ENCODE measurements at regions of chr6 and their contacts with region 1.

Region 1: DNA sequence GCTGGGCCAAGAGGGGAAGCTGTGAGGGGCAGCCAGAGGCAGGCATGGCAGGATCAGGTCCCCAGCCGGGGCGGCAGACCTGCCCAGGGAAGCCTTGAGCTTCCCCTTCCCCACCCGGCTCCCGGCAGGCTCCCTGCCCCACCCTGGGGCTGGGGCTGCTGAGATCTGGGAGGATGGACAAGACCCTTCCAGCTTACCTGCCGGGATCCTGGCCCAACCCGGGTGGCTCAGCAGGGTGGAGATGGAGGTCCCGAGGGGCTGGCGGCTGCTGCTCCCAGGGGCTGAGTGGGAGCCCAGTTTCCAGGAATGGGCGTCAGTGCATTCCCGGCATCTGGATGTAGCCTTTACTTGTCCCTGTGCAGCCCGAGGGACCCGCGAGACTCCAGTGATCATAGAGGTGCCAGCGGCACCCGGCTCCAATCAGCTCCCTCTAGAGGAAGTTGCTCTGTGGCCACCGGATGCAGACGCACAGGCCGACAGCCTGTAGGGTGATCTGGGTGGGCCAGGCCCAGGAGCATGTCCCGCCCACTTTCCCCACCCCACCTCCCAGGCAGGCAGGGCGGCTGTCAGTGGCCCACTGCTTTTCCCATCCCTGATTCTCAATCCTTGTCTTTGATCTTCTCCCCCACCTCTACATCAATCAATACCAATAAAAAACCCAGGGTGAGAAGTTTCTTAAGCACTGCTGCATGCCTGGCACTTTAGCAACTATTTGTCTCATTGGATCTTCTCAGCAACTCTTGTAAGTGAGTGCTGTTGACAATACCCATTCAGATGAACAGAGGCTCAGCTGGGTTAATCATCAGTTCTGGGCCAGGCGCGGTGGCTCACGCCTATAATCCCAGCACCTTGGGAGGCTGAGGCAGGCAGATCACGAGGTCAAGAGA is at the start of gene BAK1:
- DNase-seq: peak; percentile 95
- H3K4me3 ChIP-seq: peak within 1 kb of the TSS; percentile 73 to 90 (median 87)
- H3K27ac ChIP-seq: peak within 1 kb of the TSS; percentile 92 to 97 (median 95)
- H3K4me1 ChIP-seq: peaks cover 5 to 36% (median 33%) of the 10 kb centered on the region in 4 donors
- H3K27me3 ChIP-seq: no peaks in the 10 kb centered on the region
- CTCF ChIP-seq: peak; percentile 47 to 75 (median 58)
- EP300 ChIP-seq: no peak
- POLR2A ChIP-seq: peak; percentile 98
- total RNA-seq, gene BAK1: 52.2 to 134 (median 59.5) TPM

Region 2: GRCh38 chr6:33642897-33643296 is 62.8 kb after region 1 on chr6:
- in situ Hi-C with region 1: no loop called
- intact Hi-C with region 1: no loop called
- DNase-seq: no peak
- H3K4me3 ChIP-seq: no peak overlapping the region
- H3K27ac ChIP-seq: no peak overlapping the region
- H3K4me1 ChIP-seq: peaks cover 0 to 10% (median 7%) of the 10 kb centered on the region in 4 donors
- H3K27me3 ChIP-seq: no peaks in the 10 kb centered on the region
- CTCF ChIP-seq: no peak
- EP300 ChIP-seq: no peak
- POLR2A ChIP-seq: no peak

Region 3: GRCh38 chr6:33700391-33701050 is 120.5 kb after region 1 on chr6:
- in situ Hi-C with region 1: loop called in 3 of 4 experiments (anchors 5 to 10 kb)
- intact Hi-C with region 1: loop called (anchors 5 kb)
- DNase-seq: peak; percentile 84
- H3K4me3 ChIP-seq: no peak overlapping the region
- H3K27ac ChIP-seq: peak overlapping the region in 1 of 4 donors; percentile 16
- H3K4me1 ChIP-seq: peaks cover 0 to 12% (median 0%) of the 10 kb centered on the region in 4 donors
- H3K27me3 ChIP-seq: no peaks in the 10 kb centered on the region
- CTCF ChIP-seq: peak; percentile 56 to 75 (median 74)
- EP300 ChIP-seq: no peak
- POLR2A ChIP-seq: no peak

Region 4: GRCh38 chr6:34386316-34387137 is 806.5 kb after region 1 on chr6:
- in situ Hi-C with region 1: no loop called
- intact Hi-C with region 1: no loop called
- DNase-seq: no peak
- H3K4me3 ChIP-seq: no peak overlapping the region
- H3K27ac ChIP-seq: peak overlapping the region in 1 of 4 donors; percentile 1
- H3K4me1 ChIP-seq: peaks cover 6 to 62% (median 26%) of the 10 kb centered on the region in 4 donors
- H3K27me3 ChIP-seq: no peaks in the 10 kb centered on the region
- CTCF ChIP-seq: no peak
- EP300 ChIP-seq: no peak
- POLR2A ChIP-seq: no peak

Measured in transverse colon (tissue), 4 donors.